CD4-positive, alpha-beta T cell (primary cell): ENCODE measurements at regions of chr1 and their contacts with region 1.

Region 1: DNA sequence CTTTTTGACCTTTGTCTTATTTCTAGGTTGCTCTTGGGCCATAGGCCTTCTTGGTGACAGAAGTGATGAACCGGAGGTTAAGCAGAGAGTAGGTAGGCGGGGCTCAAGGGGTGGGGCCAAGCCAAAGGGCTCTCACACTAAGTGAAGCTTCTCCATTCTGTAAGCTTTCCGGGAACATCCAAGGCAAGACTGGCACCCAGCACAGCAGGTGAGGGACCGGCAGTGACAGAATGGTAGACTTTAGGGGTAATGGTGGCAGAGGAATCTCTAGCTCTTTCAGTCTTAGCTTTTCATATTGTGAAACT is at the start of gene TNFAIP8L2:
- DNase-seq: peak; percentile 56 to 89 (median 75)
- ATAC-seq: peak; percentile 81
- H3K4me3 ChIP-seq: peak within 1 kb of the TSS; percentile 77
- H3K4me3 Mint-ChIP-seq: peak within 1 kb of the TSS; percentile 99
- H3K27ac ChIP-seq: peak within 1 kb of the TSS; percentile 56 to 70
- H3K27ac Mint-ChIP-seq: peak within 1 kb of the TSS; percentile 85
- H3K4me1 ChIP-seq: peaks cover 53% of the 10 kb centered on the region
- H3K4me1 Mint-ChIP-seq: peaks cover 57% of the 10 kb centered on the region
- H3K27me3 ChIP-seq: no peaks in the 10 kb centered on the region
- H3K27me3 Mint-ChIP-seq: no peaks in the 10 kb centered on the region
- CTCF ChIP-seq: no peak
- total RNA-seq, gene TNFAIP8L2: 0.70 to 0.74 TPM

Region 2: DNA sequence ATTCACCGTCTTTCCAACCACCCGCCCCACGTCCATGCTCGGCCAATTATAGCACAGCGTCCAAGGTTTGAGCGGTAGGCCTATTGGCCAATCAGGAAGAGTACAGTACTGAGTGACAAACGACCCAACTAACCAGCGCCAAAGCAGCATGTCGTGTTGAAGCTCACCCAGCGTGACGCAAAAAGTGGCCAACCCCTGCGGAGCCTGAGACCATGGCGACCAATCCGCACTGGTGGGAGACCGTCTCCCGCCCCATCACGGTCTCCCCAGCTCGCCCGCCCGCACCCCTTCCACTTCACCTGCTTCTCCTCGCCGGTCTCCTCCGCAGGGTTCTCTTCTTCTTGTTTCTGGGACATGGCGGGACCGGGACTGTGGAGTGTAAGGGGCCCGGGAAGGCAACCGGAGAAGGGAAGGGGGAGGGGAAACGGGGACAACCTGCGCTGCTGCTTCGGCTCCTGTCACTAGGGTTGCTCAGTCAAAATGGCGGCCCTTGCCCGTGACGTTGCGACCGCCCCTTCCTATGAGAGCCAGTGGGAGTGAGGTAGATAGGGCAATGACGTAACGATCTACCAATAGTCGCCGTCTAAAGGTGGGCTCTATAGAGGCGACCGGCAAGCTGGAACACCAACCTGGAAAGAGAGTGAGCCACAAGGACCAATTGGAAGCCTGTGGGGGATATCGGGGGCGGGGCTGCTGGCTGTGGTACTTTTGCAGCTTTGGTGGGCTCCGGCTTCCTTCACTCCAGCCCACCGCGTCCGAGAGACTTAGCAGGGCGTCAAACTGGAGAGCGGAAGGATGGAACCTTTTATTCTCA is 527.1 kb before region 1 on chr1 and contains the start of gene ENSA:
- CTCF ChIA-PET with region 1: no interaction called
- POLR2A ChIA-PET with region 1: interaction called, 3 read pairs
- intact Hi-C with region 1: loop called in 1 of 2 experiments (anchors 10 kb)
- DNase-seq: peak; percentile 89 to 99 (median 92)
- ATAC-seq: peak; percentile 85
- H3K4me3 ChIP-seq: peak within 1 kb of the TSS; percentile 77
- H3K4me3 Mint-ChIP-seq: no peak within 1 kb of the TSS
- H3K27ac ChIP-seq: peak within 1 kb of the TSS; percentile 96 to 97
- H3K27ac Mint-ChIP-seq: no peak within 1 kb of the TSS
- H3K4me1 ChIP-seq: peaks cover 24% of the 10 kb centered on the region
- H3K4me1 Mint-ChIP-seq: peaks cover 21% of the 10 kb centered on the region
- H3K27me3 ChIP-seq: no peaks in the 10 kb centered on the region
- H3K27me3 Mint-ChIP-seq: no peaks in the 10 kb centered on the region
- CTCF ChIP-seq: no peak
- total RNA-seq, gene ENSA: 132 to 137 TPM

Region 3: DNA sequence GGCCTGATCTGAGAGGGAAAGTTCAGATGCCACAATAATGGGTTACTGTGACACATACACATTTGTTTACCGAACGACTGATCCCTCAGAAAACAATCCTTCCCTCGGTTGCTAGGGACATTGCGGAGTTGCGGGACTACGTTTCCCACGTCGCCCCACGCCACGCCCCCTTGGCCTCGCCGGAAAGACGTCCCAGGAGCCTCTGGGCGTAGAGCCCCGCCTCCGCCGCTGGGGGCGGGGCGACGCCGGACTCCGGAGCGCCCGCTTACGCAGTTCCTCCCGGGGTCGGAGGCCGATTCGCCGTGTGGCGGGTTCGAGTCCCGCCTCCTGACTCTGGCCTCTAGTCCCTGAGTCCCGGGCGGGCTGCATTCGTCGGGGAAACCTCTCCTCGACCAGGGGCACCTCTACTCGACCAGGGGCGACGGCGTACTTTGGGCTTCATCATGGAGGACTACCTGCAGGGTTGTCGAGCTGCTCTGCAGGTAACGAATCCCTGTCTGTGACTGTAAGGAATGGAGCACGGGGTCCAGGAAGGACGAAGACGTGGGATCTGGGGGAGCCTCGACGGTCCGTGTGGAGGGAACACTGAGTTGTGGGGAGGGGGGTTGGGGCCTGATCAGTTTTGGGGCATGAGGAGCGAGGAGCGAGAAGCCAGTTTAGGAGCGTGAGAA is 148.1 kb before region 1 on chr1 and contains the start of gene PRUNE1:
- CTCF ChIA-PET with region 1: no interaction called
- POLR2A ChIA-PET with region 1: interaction called, 15 read pairs
- intact Hi-C with region 1: loop called in 1 of 2 experiments (anchors 5 kb)
- DNase-seq: peak; percentile 92 to 100 (median 96)
- ATAC-seq: peak; percentile 85
- H3K4me3 ChIP-seq: peak within 1 kb of the TSS; percentile 82
- H3K4me3 Mint-ChIP-seq: peak within 1 kb of the TSS; percentile 93
- H3K27ac ChIP-seq: peak within 1 kb of the TSS; percentile 87 to 98
- H3K27ac Mint-ChIP-seq: peak within 1 kb of the TSS; percentile 98
- H3K4me1 ChIP-seq: peaks cover 83% of the 10 kb centered on the region
- H3K4me1 Mint-ChIP-seq: peaks cover 86% of the 10 kb centered on the region
- H3K27me3 ChIP-seq: no peaks in the 10 kb centered on the region
- H3K27me3 Mint-ChIP-seq: no peaks in the 10 kb centered on the region
- CTCF ChIP-seq: no peak
- total RNA-seq, gene PRUNE1: 10.9 to 12.1 TPM

Region 4: DNA sequence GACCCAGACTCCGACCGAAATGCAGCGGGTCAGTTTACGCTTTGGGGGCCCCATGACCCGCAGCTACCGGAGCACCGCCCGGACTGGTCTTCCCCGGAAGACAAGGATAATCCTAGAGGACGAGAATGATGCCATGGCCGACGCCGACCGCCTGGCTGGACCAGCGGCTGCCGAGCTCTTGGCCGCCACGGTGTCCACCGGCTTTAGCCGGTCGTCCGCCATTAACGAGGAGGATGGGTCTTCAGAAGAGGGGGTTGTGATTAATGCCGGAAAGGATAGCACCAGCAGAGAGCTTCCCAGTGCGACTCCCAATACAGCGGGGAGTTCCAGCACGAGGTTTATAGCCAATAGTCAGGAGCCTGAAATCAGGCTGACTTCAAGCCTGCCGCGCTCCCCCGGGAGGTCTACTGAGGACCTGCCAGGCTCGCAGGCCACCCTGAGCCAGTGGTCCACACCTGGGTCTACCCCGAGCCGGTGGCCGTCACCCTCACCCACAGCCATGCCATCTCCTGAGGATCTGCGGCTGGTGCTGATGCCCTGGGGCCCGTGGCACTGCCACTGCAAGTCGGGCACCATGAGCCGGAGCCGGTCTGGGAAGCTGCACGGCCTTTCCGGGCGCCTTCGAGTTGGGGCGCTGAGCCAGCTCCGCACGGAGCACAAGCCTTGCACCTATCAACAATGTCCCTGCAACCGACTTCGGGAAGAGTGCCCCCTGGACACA is 108.4 kb before region 1 on chr1:
- CTCF ChIA-PET with region 1: interaction called, 3 read pairs
- POLR2A ChIA-PET with region 1: interaction called, 13 read pairs
- intact Hi-C with region 1: no loop called
- DNase-seq: peak; percentile 28 to 84 (median 51)
- ATAC-seq: peak; percentile 77
- H3K4me3 ChIP-seq: peak overlapping the region; percentile 84
- H3K4me3 Mint-ChIP-seq: peak overlapping the region; percentile 93
- H3K27ac ChIP-seq: peak overlapping the region; percentile 65 to 73
- H3K27ac Mint-ChIP-seq: peak overlapping the region; percentile 90
- H3K4me1 ChIP-seq: peaks cover 55% of the 10 kb centered on the region
- H3K4me1 Mint-ChIP-seq: peaks cover 78% of the 10 kb centered on the region
- H3K27me3 ChIP-seq: no peaks in the 10 kb centered on the region
- H3K27me3 Mint-ChIP-seq: no peaks in the 10 kb centered on the region
- CTCF ChIP-seq: peak; percentile 52

Region 5: DNA sequence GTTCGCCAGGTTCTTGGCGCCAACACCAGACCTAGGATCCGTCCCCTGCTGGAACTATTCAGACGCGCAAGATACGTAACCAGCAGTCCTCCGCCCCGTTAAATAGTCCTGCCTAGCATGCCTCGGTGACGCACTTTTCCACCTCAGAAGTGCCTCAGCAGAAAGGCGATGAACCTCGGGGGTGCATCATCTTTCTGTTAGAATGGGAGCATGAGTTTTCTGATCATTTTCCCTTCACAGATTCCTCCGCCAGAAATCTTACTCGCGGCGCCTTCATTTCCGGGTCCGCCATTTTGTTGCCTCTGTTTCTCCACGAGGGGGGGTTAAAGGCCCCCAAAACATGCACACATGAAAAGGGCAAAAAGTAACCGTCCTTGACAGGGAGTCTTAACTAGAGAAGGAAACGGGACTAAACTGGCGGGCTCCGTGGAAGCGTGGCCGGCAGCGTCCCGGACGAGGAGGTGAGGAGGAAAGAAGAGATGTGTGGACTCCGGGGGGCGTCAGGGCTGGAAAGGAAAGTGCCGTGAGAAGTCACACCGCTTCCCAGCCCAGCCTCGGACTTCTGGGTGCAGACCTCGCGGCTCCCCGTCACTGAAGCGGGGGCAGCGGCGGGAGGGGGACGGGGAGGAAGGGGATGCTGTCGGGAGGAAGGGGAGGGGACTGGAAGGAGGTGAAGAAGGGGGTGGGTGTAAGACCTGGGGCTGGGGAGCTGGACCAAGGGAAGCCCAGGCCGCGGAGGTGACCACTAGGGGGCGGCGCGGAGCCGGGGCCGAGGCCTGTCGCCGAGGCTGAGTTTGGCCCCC is 85.8 kb before region 1 on chr1 and contains the start of gene GABPB2:
- CTCF ChIA-PET with region 1: interaction called, 15 read pairs
- POLR2A ChIA-PET with region 1: interaction called, 7 read pairs
- intact Hi-C with region 1: no loop called
- DNase-seq: peak; percentile 77 to 95 (median 82)
- ATAC-seq: peak; percentile 80
- H3K4me3 ChIP-seq: peak within 1 kb of the TSS; percentile 87
- H3K4me3 Mint-ChIP-seq: peak within 1 kb of the TSS; percentile 99
- H3K27ac ChIP-seq: peak within 1 kb of the TSS; percentile 94 to 98
- H3K27ac Mint-ChIP-seq: peak within 1 kb of the TSS; percentile 98
- H3K4me1 ChIP-seq: peaks cover 31% of the 10 kb centered on the region
- H3K4me1 Mint-ChIP-seq: peaks cover 27% of the 10 kb centered on the region
- H3K27me3 ChIP-seq: no peaks in the 10 kb centered on the region
- H3K27me3 Mint-ChIP-seq: no peaks in the 10 kb centered on the region
- CTCF ChIP-seq: peak; percentile 93
- total RNA-seq, gene GABPB2: 23.7 to 25.5 TPM

Region 6: DNA sequence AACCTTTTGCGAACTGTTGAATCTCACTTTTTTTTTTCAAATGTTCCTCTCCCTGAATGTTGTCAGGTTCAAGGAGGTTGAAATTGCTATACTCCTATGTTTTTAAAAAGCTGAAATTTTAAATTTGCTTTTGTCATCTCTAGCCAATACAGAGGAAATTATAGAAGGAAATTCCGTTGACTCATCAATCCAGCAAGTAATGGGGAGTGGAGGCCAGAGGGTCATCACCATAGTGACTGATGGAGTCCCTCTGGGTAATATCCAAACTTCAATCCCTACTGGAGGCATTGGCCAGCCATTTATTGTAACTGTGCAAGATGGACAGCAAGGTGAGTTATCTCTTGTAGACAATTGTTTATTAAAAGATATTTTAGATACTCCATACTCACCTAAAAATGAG is 49.6 kb before region 1 on chr1:
- CTCF ChIA-PET with region 1: interaction called, 61 read pairs
- POLR2A ChIA-PET with region 1: interaction called, 5 read pairs
- intact Hi-C with region 1: no loop called
- DNase-seq: no peak
- ATAC-seq: no peak
- H3K4me3 ChIP-seq: no peak overlapping the region
- H3K4me3 Mint-ChIP-seq: no peak overlapping the region
- H3K27ac ChIP-seq: no peak overlapping the region
- H3K27ac Mint-ChIP-seq: no peak overlapping the region
- H3K4me1 ChIP-seq: no peaks in the 10 kb centered on the region
- H3K4me1 Mint-ChIP-seq: no peaks in the 10 kb centered on the region
- H3K27me3 ChIP-seq: no peaks in the 10 kb centered on the region
- H3K27me3 Mint-ChIP-seq: no peaks in the 10 kb centered on the region
- CTCF ChIP-seq: no peak

Region 7: DNA sequence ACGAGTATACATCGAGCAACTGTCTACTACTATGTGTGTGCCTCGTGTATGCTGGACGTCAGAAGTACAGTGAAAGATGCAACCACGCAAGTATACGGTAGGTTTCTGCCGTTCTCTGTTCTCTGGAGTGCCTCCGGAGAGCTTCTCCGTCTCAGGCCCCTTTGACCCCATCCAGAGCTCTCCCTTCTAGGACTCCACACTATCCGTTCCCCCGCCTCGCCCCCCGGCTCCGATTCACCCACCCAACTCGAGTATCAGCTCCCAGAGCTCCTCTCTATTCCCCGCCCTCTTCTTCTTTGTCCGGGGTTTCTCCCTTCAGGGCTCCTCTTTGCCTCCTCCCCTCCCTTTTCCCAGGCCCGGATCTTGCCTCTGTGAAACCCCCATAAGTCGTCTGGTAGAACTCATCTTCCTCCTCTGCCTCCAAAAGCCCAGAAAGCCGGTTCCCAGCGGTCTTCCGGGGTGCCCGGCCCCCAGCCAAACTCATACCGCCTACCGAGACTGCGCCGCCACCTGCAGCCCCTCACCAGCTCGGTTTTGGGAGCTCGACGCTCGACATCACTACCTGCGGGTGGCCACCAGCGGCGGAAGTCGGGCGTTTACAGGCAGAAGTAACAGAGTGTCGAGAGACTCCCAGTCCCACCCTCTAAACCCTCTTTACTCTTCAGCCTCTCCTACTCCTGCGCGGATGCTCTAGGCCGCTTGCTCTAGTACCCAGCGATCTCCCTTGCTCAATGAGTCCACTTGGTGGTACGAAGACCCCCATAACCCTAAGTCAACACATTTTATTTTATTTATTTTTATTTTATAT is 33.4 kb after region 1 on chr1 and contains the start of gene VPS72:
- CTCF ChIA-PET with region 1: no interaction called
- POLR2A ChIA-PET with region 1: interaction called, 37 read pairs
- intact Hi-C with region 1: no loop called
- DNase-seq: peak; percentile 70 to 93 (median 81)
- ATAC-seq: peak; percentile 90
- H3K4me3 ChIP-seq: peak within 1 kb of the TSS; percentile 75
- H3K4me3 Mint-ChIP-seq: peak within 1 kb of the TSS; percentile 97
- H3K27ac ChIP-seq: peak within 1 kb of the TSS; percentile 58 to 73
- H3K27ac Mint-ChIP-seq: peak within 1 kb of the TSS; percentile 90
- H3K4me1 ChIP-seq: peaks cover 24% of the 10 kb centered on the region
- H3K4me1 Mint-ChIP-seq: peaks cover 42% of the 10 kb centered on the region
- H3K27me3 ChIP-seq: no peaks in the 10 kb centered on the region
- H3K27me3 Mint-ChIP-seq: no peaks in the 10 kb centered on the region
- CTCF ChIP-seq: no peak
- total RNA-seq, gene VPS72: 12.7 to 17.2 TPM